ENCODE measurements at regions of chr6 and their contacts with region 1.

Region 1: GRCh38 chr6:159720708-159721107 is 6.6 kb upstream of the WTAP start:
- DNase-seq: peak; percentile 52
- H3K4me3 ChIP-seq: no peak overlapping the region
- H3K27ac ChIP-seq: no peak overlapping the region
- H3K4me1 ChIP-seq: peaks cover 16% of the 10 kb centered on the region
- H3K27me3 ChIP-seq: no peaks in the 10 kb centered on the region
- CTCF ChIP-seq: peak; percentile 49 to 52

Region 2: DNA sequence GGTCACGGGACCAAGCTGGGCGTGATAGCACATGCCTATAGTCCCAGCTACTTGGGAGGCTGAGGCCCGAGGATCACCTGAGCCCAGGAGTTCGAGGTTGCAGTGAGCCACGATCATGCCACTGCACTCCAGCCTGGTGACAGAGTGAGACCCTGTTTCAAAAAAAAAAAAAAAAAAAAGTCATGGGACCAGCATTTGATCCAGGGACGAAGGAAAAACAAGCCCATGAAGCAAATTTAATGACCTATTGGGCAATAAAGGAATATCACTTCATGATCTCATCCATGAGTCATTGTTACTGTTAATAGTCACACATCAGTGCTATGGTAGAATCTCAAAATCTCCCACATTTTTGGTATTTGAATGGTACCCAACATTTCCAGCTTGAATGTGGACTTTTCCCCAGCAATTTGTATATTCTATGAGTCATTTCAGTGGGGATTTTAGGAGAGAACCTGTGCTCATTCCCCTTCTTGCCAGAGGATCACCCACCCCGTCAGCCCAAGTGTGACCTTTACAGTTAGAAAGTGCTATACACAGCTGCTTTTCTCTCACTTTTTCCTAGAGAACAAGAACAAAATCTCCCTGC is 19.2 kb before region 1 on chr6:
- CTCF ChIA-PET with region 1: no interaction called
- dilution Hi-C with region 1: no loop called
- in situ Hi-C with region 1: no loop called
- intact Hi-C with region 1: loop called (anchors 2 kb)
- DNase-seq: peak; percentile 94
- H3K4me3 ChIP-seq: no peak overlapping the region
- H3K27ac ChIP-seq: peak overlapping the region; percentile 76
- H3K4me1 ChIP-seq: peaks cover 15% of the 10 kb centered on the region
- H3K27me3 ChIP-seq: no peaks in the 10 kb centered on the region
- CTCF ChIP-seq: no peak

Region 3: GRCh38 chr6:159852877-159853276 is 132.2 kb after region 1 on chr6:
- CTCF ChIA-PET with region 1: no interaction called
- dilution Hi-C with region 1: no loop called
- in situ Hi-C with region 1: no loop called
- intact Hi-C with region 1: loop called (anchors 1 kb)
- DNase-seq: no peak
- H3K4me3 ChIP-seq: no peak overlapping the region
- H3K27ac ChIP-seq: no peak overlapping the region
- H3K4me1 ChIP-seq: no peaks in the 10 kb centered on the region
- H3K27me3 ChIP-seq: no peaks in the 10 kb centered on the region
- CTCF ChIP-seq: peak; percentile 23 to 51